ENCODE measurements at regions of chr18 and their contacts with region 1.

Region 1: DNA sequence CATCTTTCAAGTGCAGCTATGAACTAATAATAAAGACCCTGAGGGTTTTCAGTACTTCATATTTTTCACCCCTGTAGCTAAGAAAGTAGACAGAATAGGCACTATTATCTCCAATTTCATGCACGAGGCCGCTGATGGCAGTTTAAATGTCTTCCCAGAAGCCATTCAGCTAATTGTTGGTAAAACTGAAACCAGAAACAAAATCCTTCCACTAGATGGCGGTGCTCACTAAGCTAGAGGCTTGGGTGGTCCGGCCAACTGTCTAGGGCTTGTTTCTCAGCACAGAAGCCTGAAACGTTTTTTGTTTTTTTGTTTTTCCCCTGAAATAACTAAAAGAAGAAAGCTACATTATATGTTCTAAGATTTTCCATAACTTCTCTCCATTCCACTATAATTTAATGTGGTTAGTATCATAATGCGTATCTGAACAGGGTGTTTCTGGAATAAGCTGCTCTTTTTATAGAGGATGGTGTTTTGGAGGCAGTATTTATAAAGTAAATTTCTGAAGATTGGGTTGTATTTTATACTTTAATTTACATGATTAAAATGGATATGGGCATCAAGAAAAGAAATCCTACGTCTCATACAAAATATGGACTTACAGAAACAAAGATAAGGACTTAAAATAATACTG is 159.4 kb downstream of the PIK3C3 start:
- H3K4me3 ChIP-seq: no peak overlapping the region
- H3K27ac ChIP-seq: no peak overlapping the region
- H3K4me1 ChIP-seq: no peaks in the 10 kb centered on the region
- CTCF ChIP-seq: peak; percentile 74

Region 2: GRCh38 chr18:41587976-41588375 is 526.5 kb before region 1 on chr18:
- CTCF ChIA-PET with region 1: no interaction called
- POLR2A ChIA-PET with region 1: no interaction called
- H3K4me3 ChIP-seq: no peak overlapping the region
- H3K27ac ChIP-seq: no peak overlapping the region
- H3K4me1 ChIP-seq: no peaks in the 10 kb centered on the region
- CTCF ChIP-seq: no peak

Region 3: DNA sequence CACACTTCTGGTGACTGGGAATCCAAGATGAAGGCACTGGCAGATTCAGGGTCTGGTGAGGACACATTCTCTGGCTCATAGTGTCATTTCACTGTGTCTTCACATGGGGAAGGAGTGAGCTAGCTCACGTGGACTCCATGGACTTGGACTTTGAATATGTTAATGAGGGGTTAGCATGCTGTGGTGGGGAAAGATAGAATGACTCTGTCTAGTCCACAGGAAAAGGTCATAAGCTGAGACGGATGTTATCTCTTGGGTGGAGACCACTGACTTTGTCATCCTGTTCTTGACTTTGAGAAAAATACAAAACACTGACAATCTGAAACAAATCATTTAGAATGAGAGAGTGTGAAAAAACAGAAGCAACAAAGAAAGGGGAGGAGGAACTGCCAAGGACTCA is 13.5 kb before region 1 on chr18:
- CTCF ChIA-PET with region 1: interaction called, 33 read pairs
- POLR2A ChIA-PET with region 1: no interaction called
- H3K4me3 ChIP-seq: no peak overlapping the region
- H3K27ac ChIP-seq: no peak overlapping the region
- H3K4me1 ChIP-seq: no peaks in the 10 kb centered on the region
- CTCF ChIP-seq: no peak

Region 4: DNA sequence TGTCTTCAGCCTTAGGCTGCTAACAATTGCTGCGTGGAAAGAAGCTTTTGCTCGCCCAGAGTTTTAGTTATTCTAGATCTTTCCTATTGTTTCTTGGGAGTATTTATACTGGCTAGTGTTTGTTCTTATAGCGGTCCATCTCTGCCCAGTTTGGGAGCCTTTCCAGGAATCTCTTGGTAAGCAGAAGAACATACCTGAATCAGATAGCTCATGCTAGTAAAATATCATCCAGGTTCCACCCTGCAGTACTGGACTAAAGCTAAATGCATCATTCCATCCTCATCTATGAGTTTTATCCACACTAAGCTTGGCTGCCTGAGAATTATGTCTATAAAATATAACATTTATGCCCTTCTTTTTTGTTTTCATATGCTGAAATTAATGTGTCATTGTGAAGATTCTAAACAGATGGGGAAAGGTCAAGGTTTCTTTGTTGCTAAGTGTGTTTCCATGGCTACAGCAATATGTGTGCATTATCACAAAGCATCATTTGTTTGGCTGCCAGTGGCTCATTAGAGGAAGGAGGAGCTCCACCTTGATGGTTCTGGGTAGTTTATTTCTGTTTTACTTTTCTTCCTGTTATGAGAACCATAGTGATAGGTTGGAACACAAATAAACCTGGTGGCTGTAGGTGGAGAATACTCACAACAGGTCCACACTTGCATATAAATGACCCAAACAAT is 23.4 kb after region 1 on chr18:
- CTCF ChIA-PET with region 1: interaction called, 10 read pairs
- POLR2A ChIA-PET with region 1: no interaction called
- H3K4me3 ChIP-seq: no peak overlapping the region
- H3K27ac ChIP-seq: no peak overlapping the region
- H3K4me1 ChIP-seq: no peaks in the 10 kb centered on the region
- CTCF ChIP-seq: no peak

Region 5: GRCh38 chr18:42298759-42299675 is 184.6 kb after region 1 on chr18:
- CTCF ChIA-PET with region 1: interaction called, 24 read pairs
- POLR2A ChIA-PET with region 1: no interaction called
- H3K4me3 ChIP-seq: no peak overlapping the region
- H3K27ac ChIP-seq: no peak overlapping the region
- H3K4me1 ChIP-seq: no peaks in the 10 kb centered on the region
- CTCF ChIP-seq: peak; percentile 41

Region 6: DNA sequence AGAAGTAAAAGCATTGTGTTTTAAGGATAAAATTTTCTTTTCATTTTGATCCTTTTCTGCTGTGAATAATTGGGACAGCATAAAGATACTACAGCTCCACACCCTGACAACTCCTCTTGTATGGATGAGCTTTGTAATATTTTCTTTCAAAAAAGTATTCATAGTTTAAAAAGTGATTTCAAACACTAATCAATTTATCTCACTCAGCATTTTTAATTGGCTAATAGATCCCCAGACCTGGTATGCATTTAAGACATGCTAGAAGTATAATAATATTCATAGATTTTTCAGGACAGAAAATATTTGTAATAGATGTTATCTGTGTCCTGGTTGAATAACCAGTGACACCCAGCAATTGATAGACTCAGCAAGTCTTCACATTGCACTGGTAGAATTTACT is 490.4 kb after region 1 on chr18:
- CTCF ChIA-PET with region 1: no interaction called
- POLR2A ChIA-PET with region 1: no interaction called
- H3K4me3 ChIP-seq: no peak overlapping the region
- H3K27ac ChIP-seq: no peak overlapping the region
- H3K4me1 ChIP-seq: no peaks in the 10 kb centered on the region
- CTCF ChIP-seq: no peak

Region 7: GRCh38 chr18:43422518-43422917 is 1308.1 kb after region 1 on chr18:
- CTCF ChIA-PET with region 1: interaction called, 16 read pairs
- POLR2A ChIA-PET with region 1: no interaction called
- H3K4me3 ChIP-seq: no peak overlapping the region
- H3K27ac ChIP-seq: no peak overlapping the region
- H3K4me1 ChIP-seq: no peaks in the 10 kb centered on the region; the same call in 1 of the 2 replicates
- CTCF ChIP-seq: peak; percentile 20; the same call in 1 of the 2 replicates

Region 8: GRCh38 chr18:43596105-43596712 is 1481.8 kb after region 1 on chr18:
- CTCF ChIA-PET with region 1: interaction called, 14 read pairs
- POLR2A ChIA-PET with region 1: no interaction called
- H3K4me3 ChIP-seq: no peak overlapping the region
- H3K27ac ChIP-seq: no peak overlapping the region
- H3K4me1 ChIP-seq: no peaks in the 10 kb centered on the region
- CTCF ChIP-seq: no peak